Left ventricle myocardium superior (tissue), 1 donor: ENCODE measurements at regions of chr14 and their contacts with region 1.

Region 1: GRCh38 chr14:51780006-51780692 is 80.3 kb upstream of the GNG2 start:
- DNase-seq: peak; percentile 69
- ATAC-seq: peak; percentile 73

Region 2: GRCh38 chr14:50954811-50955372 is 825.3 kb before region 1 on chr14:
- intact Hi-C with region 1: loop called (anchors 10 kb)
- DNase-seq: no peak
- ATAC-seq: peak; percentile 75

Region 3: DNA sequence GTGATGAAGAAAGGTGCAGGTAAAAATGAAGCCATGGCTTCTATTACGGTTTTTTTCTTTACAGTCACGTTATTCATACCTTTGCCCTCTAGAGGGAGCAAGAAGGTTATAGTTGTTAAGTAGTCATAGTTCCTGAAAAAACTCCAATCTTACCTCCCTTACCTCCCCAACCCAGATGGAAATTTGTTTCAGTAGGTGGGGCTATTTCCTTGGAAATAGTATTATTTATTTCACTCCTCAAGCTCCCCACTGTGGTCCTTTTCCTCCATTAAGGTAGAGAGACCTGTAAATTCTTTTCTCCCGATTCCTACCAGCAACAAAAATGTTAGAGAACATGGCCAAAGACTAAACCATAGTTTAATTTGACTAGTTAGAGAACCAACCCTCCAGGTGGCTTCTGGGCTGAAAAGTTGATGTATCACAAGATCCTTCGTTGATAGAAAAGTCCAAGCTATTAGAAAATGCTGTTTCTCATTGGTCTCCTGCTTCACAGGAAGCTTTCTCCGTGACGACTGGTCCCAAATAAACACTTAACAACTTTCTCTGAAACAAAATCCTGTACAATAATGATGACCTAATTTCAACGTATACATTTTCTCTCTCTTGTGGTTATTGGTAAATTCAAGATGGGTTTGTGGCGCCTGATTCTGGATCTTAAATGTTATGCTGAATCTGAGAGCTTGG is 496.6 kb before region 1 on chr14:
- intact Hi-C with region 1: loop called (anchors 2 kb)
- DNase-seq: no peak
- ATAC-seq: peak; percentile 90

Region 4: DNA sequence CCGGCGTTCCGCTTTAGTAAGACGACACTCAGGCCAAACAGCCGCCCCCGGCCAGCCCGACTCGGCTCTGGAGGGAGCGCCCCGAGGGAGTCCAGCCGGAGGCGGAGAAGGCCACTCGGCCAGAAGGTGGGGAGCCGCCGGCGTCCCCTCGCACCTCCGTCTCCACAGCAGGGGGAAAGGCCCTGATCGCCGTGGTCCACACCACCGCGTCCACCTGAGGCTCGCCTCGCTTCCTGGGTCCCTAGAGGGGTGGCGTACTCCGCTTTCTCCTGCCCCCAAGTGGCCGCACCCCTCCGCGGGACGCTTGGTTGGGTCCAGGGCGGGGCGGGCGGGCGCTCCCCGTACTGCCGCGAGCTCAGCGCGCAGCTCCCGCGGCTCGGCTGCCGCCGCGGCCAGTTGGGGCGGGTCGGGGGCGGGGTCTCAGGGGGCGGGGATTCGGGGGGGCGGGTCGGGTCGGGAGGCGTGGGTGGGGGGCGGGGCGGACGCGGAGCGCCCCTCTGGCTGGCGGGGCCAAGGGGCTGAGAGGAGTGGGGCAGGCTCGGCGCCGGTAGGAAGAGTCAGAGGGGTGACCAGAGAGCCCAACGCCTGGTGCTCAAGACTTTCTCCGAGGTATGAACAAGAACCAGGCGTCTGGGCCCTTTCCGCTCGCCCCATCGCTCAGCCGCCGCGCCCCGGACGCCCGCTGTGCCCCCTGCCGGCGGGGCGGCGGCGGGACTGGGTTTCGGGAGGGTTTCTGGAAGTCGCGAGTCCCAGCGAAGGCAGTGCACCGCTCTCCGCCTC is 128.6 kb before region 1 on chr14 and contains the start of gene FRMD6:
- intact Hi-C with region 1: loop called (anchors 5 kb)
- DNase-seq: peak; percentile 93
- ATAC-seq: peak; percentile 93
- total RNA-seq, gene FRMD6: 11.1 TPM

Region 5: DNA sequence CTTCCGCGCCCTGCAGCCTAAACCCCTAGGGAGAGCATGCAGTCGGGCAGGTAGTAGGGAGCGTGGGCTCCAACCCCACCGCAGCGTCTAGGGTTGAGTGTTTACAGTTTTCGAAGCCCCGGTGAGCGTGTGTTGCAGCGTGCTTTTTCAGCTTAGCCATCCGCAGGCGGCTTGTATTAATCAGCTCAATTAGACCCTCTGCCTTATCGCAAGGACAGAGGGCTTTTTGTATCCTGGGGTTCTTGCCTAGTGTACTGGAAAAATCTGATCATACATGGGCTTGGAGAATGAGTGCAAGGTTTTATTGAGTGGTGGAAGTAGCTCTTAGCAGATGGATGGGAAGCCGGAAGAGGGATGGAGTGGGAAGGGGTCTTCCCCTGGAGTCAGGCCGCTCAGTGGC is 35.9 kb after region 1 on chr14:
- intact Hi-C with region 1: no loop called
- DNase-seq: no peak
- ATAC-seq: no peak

Region 6: DNA sequence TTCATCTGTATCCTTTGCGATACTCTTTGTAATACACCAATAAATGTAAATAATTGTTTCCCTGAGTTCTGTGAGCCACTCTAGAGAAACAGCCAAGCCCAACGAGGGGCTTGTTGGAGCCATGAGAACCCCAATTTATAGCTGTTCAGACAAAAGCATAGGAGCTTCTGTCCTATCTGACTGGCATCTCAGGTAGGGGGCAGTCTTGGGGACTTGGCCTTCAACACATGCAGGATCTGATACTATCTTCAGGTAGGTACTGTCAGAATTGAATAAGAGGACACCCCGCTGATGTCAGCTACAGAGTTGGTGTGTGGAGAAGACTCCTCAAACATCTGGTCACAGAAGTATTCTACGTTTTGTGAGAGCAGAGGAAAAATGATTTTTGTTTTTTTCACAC is 746.9 kb after region 1 on chr14:
- intact Hi-C with region 1: no loop called
- DNase-seq: no peak
- ATAC-seq: no peak